ENCODE measurements at regions of chr7 and their contacts with region 1.

Region 1: DNA sequence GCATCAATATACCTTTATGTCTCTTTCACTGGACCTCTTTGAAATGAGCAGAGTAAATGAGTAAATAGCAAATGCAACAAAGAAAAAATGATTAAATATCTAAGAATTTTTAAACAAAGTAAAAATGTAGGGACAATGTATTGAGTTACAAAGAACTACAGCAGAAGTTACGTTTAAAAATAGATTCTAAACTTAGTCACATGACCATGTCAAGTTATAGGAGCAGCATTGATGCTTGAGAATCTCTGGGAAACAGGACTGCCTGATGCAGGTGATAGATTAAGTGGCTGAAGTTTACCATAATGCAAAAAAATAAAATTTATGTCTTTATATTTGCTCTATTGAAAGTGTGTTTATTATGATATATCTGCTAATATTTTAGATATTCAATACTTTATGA is 95.7 kb upstream of the PPP1R3A start:
- DNase-seq: no peak
- H3K4me3 Mint-ChIP-seq: no peak overlapping the region
- H3K27ac Mint-ChIP-seq: no peak overlapping the region
- H3K4me1 Mint-ChIP-seq: no peaks in the 10 kb centered on the region
- H3K27me3 Mint-ChIP-seq: no peaks in the 10 kb centered on the region
- CTCF ChIP-seq: no peak

Region 2: GRCh38 chr7:113710310-113711106 is 304.0 kb before region 1 on chr7:
- CTCF ChIA-PET with region 1: no interaction called
- intact Hi-C with region 1: no loop called
- DNase-seq: peak; percentile 68
- H3K4me3 Mint-ChIP-seq: no peak overlapping the region
- H3K27ac Mint-ChIP-seq: no peak overlapping the region
- H3K4me1 Mint-ChIP-seq: no peaks in the 10 kb centered on the region
- H3K27me3 Mint-ChIP-seq: no peaks in the 10 kb centered on the region
- CTCF ChIP-seq: peak; percentile 80

Region 3: DNA sequence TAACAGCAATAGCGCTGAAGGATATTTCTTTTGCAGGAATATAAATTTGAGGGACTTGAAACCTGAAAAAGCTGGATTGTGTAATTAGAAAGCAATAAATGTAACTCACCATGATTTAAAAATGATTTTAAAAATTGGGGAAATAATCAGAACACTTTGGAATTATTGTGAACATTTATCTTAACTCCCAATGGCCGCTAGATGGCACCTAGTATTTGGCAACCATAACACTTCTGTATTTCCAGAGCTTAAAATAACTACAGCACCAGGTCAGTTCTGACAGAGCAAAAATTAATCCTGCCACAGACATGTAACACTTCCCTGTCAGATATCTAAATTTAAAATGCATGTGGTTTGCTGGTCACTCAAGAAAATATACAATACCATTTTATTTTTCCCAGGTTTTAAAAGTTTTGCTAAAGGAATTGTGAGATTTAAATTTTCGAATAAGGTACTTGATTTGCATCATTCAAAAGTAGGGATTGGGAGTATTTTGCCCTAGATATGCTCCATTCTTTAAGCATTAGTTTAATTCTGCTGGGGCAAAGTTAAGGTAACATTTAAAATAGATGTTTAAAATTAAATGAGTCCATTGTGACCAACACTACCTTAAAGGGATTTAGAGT is 240.2 kb before region 1 on chr7:
- CTCF ChIA-PET with region 1: no interaction called
- intact Hi-C with region 1: loop called (anchors 10 kb)
- DNase-seq: peak; percentile 29
- H3K4me3 Mint-ChIP-seq: no peak overlapping the region
- H3K27ac Mint-ChIP-seq: no peak overlapping the region
- H3K4me1 Mint-ChIP-seq: peaks cover 5% of the 10 kb centered on the region
- H3K27me3 Mint-ChIP-seq: no peaks in the 10 kb centered on the region
- CTCF ChIP-seq: no peak

Region 4: GRCh38 chr7:113976508-113976907 is 38.0 kb before region 1 on chr7:
- CTCF ChIA-PET with region 1: no interaction called
- intact Hi-C with region 1: no loop called
- DNase-seq: no peak
- H3K4me3 Mint-ChIP-seq: no peak overlapping the region
- H3K27ac Mint-ChIP-seq: no peak overlapping the region
- H3K4me1 Mint-ChIP-seq: no peaks in the 10 kb centered on the region
- H3K27me3 Mint-ChIP-seq: no peaks in the 10 kb centered on the region
- CTCF ChIP-seq: no peak

Region 5: GRCh38 chr7:115233809-115234208 is 1219.3 kb after region 1 on chr7:
- CTCF ChIA-PET with region 1: no interaction called
- intact Hi-C with region 1: no loop called
- DNase-seq: no peak
- H3K4me3 Mint-ChIP-seq: no peak overlapping the region
- H3K27ac Mint-ChIP-seq: no peak overlapping the region
- H3K4me1 Mint-ChIP-seq: peaks cover 9% of the 10 kb centered on the region
- H3K27me3 Mint-ChIP-seq: no peaks in the 10 kb centered on the region
- CTCF ChIP-seq: no peak

Measured in Calu3 (cell line).